ENCODE measurements at regions of chr1 and their contacts with region 1.

Region 1: GRCh38 chr1:161098210-161099068 is at the start of gene KLHDC9:
- DNase-seq: peak; percentile 87
- H3K4me3 Mint-ChIP-seq: peak within 1 kb of the TSS; percentile 73
- H3K27ac Mint-ChIP-seq: peak within 1 kb of the TSS; percentile 74
- H3K4me1 Mint-ChIP-seq: peaks cover 37% of the 10 kb centered on the region
- H3K27me3 Mint-ChIP-seq: no peaks in the 10 kb centered on the region
- total RNA-seq, gene KLHDC9: 1.2 to 1.6 TPM

Region 2: GRCh38 chr1:160975026-160975425 is 123.4 kb before region 1 on chr1:
- CTCF ChIA-PET with region 1: no interaction called
- POLR2A ChIA-PET with region 1: no interaction called
- intact Hi-C with region 1: no loop called
- DNase-seq: no peak
- H3K4me3 Mint-ChIP-seq: no peak overlapping the region
- H3K27ac Mint-ChIP-seq: no peak overlapping the region
- H3K4me1 Mint-ChIP-seq: peaks cover 11% of the 10 kb centered on the region
- H3K27me3 Mint-ChIP-seq: peaks cover 2% of the 10 kb centered on the region

Region 3: GRCh38 chr1:160987359-160988062 is 110.9 kb before region 1 on chr1:
- CTCF ChIA-PET with region 1: interaction called, 25 read pairs
- POLR2A ChIA-PET with region 1: no interaction called
- intact Hi-C with region 1: no loop called
- DNase-seq: no peak
- H3K4me3 Mint-ChIP-seq: no peak overlapping the region
- H3K27ac Mint-ChIP-seq: no peak overlapping the region
- H3K4me1 Mint-ChIP-seq: peaks cover 4% of the 10 kb centered on the region
- H3K27me3 Mint-ChIP-seq: peaks cover 6% of the 10 kb centered on the region

Region 4: GRCh38 chr1:161045750-161046571 is 52.5 kb before region 1 on chr1 and contains the start of gene USF1:
- CTCF ChIA-PET with region 1: interaction called, 153 read pairs
- POLR2A ChIA-PET with region 1: interaction called, 17 read pairs
- intact Hi-C with region 1: loop called (anchors 1 kb)
- DNase-seq: peak; percentile 96
- H3K4me3 Mint-ChIP-seq: peak within 1 kb of the TSS; percentile 90
- H3K27ac Mint-ChIP-seq: peak within 1 kb of the TSS; percentile 96
- H3K4me1 Mint-ChIP-seq: peaks cover 29% of the 10 kb centered on the region
- H3K27me3 Mint-ChIP-seq: no peaks in the 10 kb centered on the region
- total RNA-seq, gene USF1: 43.4 to 43.7 TPM

Region 5: GRCh38 chr1:161082991-161083742 is 15.3 kb before region 1 on chr1:
- CTCF ChIA-PET with region 1: interaction called, 25 read pairs
- POLR2A ChIA-PET with region 1: interaction called, 3 read pairs
- intact Hi-C with region 1: no loop called
- DNase-seq: no peak
- H3K4me3 Mint-ChIP-seq: no peak overlapping the region
- H3K27ac Mint-ChIP-seq: no peak overlapping the region
- H3K4me1 Mint-ChIP-seq: no peaks in the 10 kb centered on the region
- H3K27me3 Mint-ChIP-seq: no peaks in the 10 kb centered on the region

Region 6: GRCh38 chr1:161132410-161133219 is 34.2 kb after region 1 on chr1 and contains the start of gene DEDD:
- CTCF ChIA-PET with region 1: interaction called, 18 read pairs
- POLR2A ChIA-PET with region 1: interaction called, 4 read pairs
- intact Hi-C with region 1: no loop called
- DNase-seq: peak; percentile 96
- H3K4me3 Mint-ChIP-seq: no peak within 1 kb of the TSS
- H3K27ac Mint-ChIP-seq: no peak within 1 kb of the TSS
- H3K4me1 Mint-ChIP-seq: peaks cover 43% of the 10 kb centered on the region
- H3K27me3 Mint-ChIP-seq: no peaks in the 10 kb centered on the region
- total RNA-seq, gene DEDD: 35.0 to 40.2 TPM

Region 7: DNA sequence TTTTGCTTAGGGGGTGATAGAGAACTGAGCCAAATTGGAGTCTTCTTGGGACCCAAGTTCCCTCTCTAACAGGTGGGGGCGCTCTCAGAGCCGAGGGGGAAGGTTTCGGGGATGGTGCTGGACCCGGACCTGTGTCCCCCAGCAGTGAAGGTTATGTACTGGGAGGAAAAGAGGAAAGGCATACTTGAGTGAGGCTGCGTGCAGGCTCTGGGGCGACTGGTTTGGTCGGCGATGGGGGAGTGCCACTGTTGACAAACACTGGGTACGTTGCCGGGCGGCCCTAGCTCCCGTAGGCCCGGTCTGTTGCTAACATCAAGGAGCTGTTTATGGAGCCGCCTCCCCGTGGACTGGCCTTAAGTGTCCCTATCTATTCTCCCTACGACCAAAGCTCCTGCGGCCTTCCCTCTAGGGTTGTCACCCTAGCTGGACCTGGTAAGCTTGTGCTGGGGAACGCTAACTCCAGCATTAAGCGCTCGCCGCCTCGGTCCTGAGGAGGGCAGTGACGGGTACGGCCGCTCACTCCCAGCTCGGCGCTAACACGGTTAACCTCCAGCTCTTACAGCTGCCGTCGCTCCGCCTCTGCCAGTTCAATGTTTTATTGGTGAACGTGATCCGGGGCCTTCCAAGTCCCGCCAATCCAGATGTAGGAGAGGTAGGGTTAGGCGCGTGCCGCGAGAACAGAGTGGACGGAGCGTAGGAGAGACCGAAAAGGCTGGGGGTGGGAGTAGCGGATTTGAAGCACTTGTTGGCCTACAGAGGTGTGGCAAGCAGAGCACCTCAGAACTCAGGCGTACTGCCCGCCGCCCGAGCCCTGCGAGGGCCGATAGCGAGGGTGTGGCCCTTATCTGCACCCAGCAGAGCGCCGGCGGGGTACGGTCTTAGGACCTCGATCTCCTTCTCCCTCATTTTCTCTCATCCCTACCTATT is 67.6 kb after region 1 on chr1 and contains the start of gene PPOX:
- CTCF ChIA-PET with region 1: interaction called, 12 read pairs
- POLR2A ChIA-PET with region 1: no interaction called
- intact Hi-C with region 1: no loop called
- DNase-seq: peak; percentile 97
- H3K4me3 Mint-ChIP-seq: peak within 1 kb of the TSS; percentile 86
- H3K27ac Mint-ChIP-seq: peak within 1 kb of the TSS; percentile 93
- H3K4me1 Mint-ChIP-seq: peaks cover 48% of the 10 kb centered on the region
- H3K27me3 Mint-ChIP-seq: no peaks in the 10 kb centered on the region
- total RNA-seq, gene PPOX: 27.0 to 30.7 TPM

Measured in activated CD4-positive, alpha-beta memory T cell treated with anti-CD3 and anti-CD28 coated beads for 36 hours (primary cell).